ENCODE measurements at regions of chrX and their contacts with region 1.

Region 1: DNA sequence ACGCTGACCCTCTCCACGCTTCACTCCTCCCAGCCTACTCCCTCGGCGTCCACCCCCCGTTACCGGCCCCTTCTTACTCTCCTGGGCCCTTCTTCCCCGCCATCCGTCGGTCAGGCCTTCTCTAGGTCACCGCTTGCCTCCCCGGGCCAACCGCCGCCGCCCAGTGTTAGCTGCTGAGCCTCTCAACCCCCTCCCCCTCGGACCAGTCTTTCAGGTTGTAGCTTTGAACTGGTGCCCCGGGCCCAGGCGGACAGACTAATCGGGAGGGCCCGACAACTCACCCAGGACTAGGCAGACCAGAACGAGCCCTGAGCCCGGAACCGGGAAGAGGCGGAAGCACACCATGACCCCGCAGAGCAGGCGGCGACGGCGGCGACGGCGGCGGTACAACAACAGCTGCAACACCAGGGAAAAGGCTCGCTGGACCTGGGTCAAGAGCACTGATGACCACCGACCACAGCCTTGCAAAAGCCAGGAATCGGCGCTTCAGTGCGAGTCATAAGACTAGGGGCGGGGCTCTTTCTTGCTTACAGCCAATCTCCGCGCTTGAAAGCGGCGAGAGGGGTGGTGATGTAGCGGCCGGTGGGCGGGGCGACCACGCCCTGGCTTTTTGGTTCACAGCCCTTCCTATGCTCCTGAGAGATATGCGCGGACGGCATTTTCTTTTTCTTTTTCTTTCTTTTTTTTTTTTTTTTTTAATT is at the start of gene LAMP2:
- DNase-seq: peak; percentile 74
- ATAC-seq: peak; percentile 97
- H3K4me3 Mint-ChIP-seq: peak within 1 kb of the TSS; percentile 94
- H3K27ac Mint-ChIP-seq: peak within 1 kb of the TSS; percentile 86
- H3K4me1 Mint-ChIP-seq: peaks cover 31% of the 10 kb centered on the region
- H3K27me3 Mint-ChIP-seq: no peaks in the 10 kb centered on the region
- CTCF ChIP-seq: no peak
- total RNA-seq, gene LAMP2: 29.7 and 32.6 TPM in 2 replicates

Region 2: DNA sequence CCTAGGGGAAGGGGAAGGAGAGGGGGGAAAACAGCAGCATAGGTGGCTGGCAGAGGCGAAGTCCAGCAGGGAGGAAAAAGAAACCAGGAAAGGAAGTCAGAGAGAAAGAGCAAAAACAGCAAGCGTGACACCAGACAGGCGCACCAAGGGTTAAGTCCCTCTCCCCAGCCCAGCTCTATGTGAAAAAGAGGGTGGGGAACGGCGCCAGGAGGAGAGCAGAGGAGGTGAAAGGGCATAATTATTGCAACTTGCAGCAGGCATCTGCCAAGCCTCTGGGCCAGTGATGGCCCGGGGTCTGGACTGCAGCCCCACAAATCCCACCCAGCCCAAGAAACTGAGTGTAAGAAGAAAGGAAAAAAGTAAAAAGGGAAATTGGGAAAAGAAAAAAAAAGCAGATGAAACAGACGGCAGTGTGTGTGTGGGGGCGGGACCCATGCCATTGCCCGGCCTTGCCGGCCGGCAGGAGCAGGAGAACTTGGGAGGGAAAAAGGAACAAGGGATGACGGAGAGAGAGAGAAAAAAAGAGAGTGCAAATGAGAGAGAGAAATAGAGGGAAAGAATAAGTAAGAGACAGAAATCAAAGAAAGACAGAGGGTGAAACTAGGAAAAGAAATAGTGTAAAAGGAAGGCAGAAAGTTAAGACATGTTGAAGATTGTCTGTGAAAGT is 324.7 kb before region 1 on chrX:
- CTCF ChIA-PET with region 1: no interaction called
- POLR2A ChIA-PET with region 1: no interaction called
- intact Hi-C with region 1: loop called (anchors 10 kb)
- DNase-seq: no peak
- ATAC-seq: no peak
- H3K4me3 Mint-ChIP-seq: no peak overlapping the region
- H3K27ac Mint-ChIP-seq: no peak overlapping the region
- H3K4me1 Mint-ChIP-seq: no peaks in the 10 kb centered on the region
- H3K27me3 Mint-ChIP-seq: no peaks in the 10 kb centered on the region
- CTCF ChIP-seq: no peak

Region 3: GRCh38 chrX:120250522-120251271 is 218.3 kb before region 1 on chrX and contains the start of gene ZBTB33:
- CTCF ChIA-PET with region 1: no interaction called
- POLR2A ChIA-PET with region 1: no interaction called
- intact Hi-C with region 1: loop called (anchors 2 kb)
- DNase-seq: peak; percentile 74
- ATAC-seq: peak; percentile 99
- H3K4me3 Mint-ChIP-seq: peak within 1 kb of the TSS; percentile 93
- H3K27ac Mint-ChIP-seq: peak within 1 kb of the TSS; percentile 93
- H3K4me1 Mint-ChIP-seq: peaks cover 14% of the 10 kb centered on the region
- H3K27me3 Mint-ChIP-seq: no peaks in the 10 kb centered on the region
- CTCF ChIP-seq: no peak
- total RNA-seq, gene ZBTB33: 17.4 and 19.8 TPM in 2 replicates

Region 4: GRCh38 chrX:120316589-120317283 is 152.2 kb before region 1 on chrX:
- CTCF ChIA-PET with region 1: no interaction called
- POLR2A ChIA-PET with region 1: no interaction called
- intact Hi-C with region 1: loop called (anchors 5 kb)
- DNase-seq: no peak
- ATAC-seq: no peak
- H3K4me3 Mint-ChIP-seq: no peak overlapping the region
- H3K27ac Mint-ChIP-seq: no peak overlapping the region
- H3K4me1 Mint-ChIP-seq: peaks cover 3% of the 10 kb centered on the region
- H3K27me3 Mint-ChIP-seq: peaks cover 2% of the 10 kb centered on the region
- CTCF ChIP-seq: no peak

Region 5: DNA sequence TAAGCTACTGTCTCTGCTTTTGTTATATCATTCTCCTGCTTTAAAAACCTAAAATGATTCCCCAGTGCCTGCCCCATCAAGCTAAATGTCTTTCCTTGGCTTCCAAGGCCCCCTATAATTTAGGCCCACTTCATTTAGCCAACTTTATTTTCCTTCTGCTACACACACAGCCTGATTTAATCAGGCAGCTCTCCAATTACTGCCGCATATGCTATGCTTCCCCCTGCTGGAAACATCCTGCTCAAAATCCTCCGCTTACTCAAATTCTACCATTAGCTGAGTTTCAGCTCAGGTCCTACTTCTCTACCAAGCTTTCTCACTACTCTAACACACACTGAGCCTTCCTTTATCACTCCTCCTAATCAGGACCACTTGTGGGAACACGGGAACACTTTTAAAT is 16.8 kb before region 1 on chrX:
- CTCF ChIA-PET with region 1: interaction called, 3 read pairs
- POLR2A ChIA-PET with region 1: no interaction called
- intact Hi-C with region 1: loop called (anchors 1 kb)
- DNase-seq: no peak
- ATAC-seq: no peak
- H3K4me3 Mint-ChIP-seq: no peak overlapping the region
- H3K27ac Mint-ChIP-seq: no peak overlapping the region
- H3K4me1 Mint-ChIP-seq: peaks cover 17% of the 10 kb centered on the region
- H3K27me3 Mint-ChIP-seq: no peaks in the 10 kb centered on the region
- CTCF ChIP-seq: no peak

Region 6: DNA sequence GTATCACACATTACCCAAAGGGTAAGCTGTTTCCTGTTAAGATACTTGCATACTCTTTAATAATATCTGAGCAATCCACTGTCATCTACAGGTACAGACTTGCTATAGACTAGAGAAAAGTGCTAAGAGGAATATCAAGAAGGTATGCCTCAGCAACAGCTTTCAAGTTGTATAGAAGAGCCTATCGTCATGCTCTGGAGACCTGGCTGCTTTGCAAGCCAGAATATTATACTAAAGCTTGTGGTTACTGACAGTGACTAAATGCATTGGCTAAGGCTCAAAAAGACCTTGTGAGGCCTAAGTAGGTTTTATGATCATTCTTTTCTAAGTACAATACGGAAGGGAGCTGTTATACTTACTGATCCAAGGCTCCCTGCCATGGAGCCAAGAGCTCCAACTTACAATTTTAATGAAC is 11.2 kb before region 1 on chrX:
- CTCF ChIA-PET with region 1: interaction called, 3 read pairs
- POLR2A ChIA-PET with region 1: interaction called, 6 read pairs
- intact Hi-C with region 1: loop called (anchors 1 kb)
- DNase-seq: no peak
- ATAC-seq: peak; percentile 97
- H3K4me3 Mint-ChIP-seq: no peak overlapping the region
- H3K27ac Mint-ChIP-seq: no peak overlapping the region
- H3K4me1 Mint-ChIP-seq: peaks cover 42% of the 10 kb centered on the region
- H3K27me3 Mint-ChIP-seq: no peaks in the 10 kb centered on the region
- CTCF ChIP-seq: no peak

Region 7: GRCh38 chrX:120485638-120486520 is 16.9 kb after region 1 on chrX:
- CTCF ChIA-PET with region 1: interaction called, 3 read pairs
- POLR2A ChIA-PET with region 1: interaction called, 8 read pairs
- intact Hi-C with region 1: loop called (anchors 1 kb)
- DNase-seq: peak; percentile 38
- ATAC-seq: peak; percentile 83
- H3K4me3 Mint-ChIP-seq: peak overlapping the region; percentile 87
- H3K27ac Mint-ChIP-seq: peak overlapping the region; percentile 91
- H3K4me1 Mint-ChIP-seq: peaks cover 14% of the 10 kb centered on the region
- H3K27me3 Mint-ChIP-seq: no peaks in the 10 kb centered on the region
- CTCF ChIP-seq: no peak

Region 8: DNA sequence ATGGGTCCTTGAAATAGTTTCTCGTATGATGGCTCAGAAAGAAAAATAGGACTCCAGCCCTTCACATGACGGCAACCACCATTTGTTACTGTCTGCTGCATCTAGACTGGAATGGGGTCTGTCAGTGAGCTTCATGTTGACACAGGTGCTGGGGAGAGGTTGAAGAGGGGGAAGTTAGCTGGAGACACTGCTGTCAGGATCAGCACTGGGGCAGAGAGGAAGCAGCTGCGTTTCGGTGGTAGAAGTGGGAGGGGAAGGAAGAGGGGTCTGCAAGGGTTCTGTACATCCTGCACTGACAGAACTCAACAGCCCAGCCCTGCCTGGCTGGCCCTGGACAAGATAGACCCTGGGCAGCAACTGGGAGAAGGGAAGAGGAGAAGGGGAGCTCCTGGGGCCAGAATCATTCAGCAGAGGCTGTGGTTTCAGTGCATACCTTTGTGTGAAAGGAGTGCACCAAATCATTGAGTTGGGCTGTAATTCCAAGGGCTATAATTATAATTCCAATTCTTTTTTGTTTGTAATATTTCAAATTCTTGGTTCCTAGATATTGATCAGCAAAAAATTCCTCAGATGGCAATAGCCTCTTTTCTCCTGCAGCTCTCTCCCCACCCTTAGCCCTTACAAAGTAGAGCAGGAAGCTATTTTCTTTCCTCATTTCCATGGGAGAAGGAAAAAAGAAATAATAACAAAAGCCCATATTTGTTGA is 280.3 kb after region 1 on chrX:
- CTCF ChIA-PET with region 1: no interaction called
- POLR2A ChIA-PET with region 1: no interaction called
- intact Hi-C with region 1: no loop called
- DNase-seq: peak; percentile 18
- ATAC-seq: peak; percentile 80
- H3K4me3 Mint-ChIP-seq: peak overlapping the region; percentile 66
- H3K27ac Mint-ChIP-seq: peak overlapping the region; percentile 86
- H3K4me1 Mint-ChIP-seq: peaks cover 76% of the 10 kb centered on the region
- H3K27me3 Mint-ChIP-seq: no peaks in the 10 kb centered on the region
- CTCF ChIP-seq: no peak

Measured in activated B cell treated with CpG ODN at 0.5 μM for 24 hours (primary cell).